Activated B cell treated with CpG ODN at 0.5 μM for 24 hours (primary cell): ENCODE measurements at regions of chr5 and their contacts with region 1.

Region 1: DNA sequence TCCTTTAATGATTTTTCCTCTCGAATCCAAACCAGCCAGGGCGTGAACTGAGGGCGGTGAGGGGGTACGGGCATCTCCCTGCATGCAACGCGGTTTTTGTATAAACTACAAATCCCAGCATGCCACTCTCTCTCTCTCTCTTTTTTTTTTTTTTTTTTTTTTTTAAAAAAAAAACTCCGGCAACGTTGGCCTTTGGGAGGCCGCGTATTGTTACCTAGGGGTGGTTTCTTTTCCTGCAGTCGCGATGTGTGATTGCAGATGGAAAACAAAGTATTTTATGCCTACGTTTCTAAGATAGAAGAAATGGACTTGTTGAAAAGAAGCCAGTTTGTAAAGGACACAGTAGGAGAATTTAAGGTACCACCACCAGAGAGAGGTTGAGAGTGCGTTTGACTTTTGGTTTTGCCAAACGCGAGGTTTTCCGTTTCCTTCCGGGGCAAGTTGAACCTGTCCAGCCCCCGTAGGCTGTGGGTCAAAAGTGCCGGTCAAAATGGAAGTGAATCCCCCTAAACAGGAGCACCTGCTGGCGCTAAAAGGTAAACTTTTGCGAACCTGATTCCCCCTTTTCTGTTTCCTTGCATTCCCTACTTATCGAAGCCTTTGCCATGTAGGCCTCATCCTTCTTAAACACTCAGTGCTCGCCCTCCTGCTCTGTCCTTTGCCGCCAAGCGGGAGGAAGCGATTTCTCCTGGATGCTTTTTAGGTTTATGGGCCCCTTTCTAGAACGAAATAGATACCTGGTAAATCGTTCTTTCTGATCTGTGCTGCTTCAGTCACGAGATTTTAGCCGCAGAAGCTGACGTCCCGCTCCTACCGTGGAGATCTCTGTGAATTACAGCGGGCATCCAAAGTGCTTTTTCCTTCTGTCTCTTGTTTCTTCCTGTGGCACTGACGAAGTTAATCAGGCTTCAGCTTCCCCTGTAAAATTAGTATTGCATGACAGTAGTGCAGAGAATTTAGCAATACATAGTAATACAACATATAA is at the starts of genes SHLD3 and TRAPPC13:
- DNase-seq: peak; percentile 58
- ATAC-seq: peak; percentile 74
- H3K4me3 Mint-ChIP-seq: peak within 1 kb of the TSS; percentile 99
- H3K27ac Mint-ChIP-seq: peak within 1 kb of the TSS; percentile 98
- H3K4me1 Mint-ChIP-seq: peaks cover 43% of the 10 kb centered on the region
- H3K27me3 Mint-ChIP-seq: no peaks in the 10 kb centered on the region
- CTCF ChIP-seq: no peak
- total RNA-seq, gene SHLD3: 5.7 and 6.2 TPM in 2 replicates
- total RNA-seq, gene TRAPPC13: 19.3 and 29.0 TPM in 2 replicates

Region 2: DNA sequence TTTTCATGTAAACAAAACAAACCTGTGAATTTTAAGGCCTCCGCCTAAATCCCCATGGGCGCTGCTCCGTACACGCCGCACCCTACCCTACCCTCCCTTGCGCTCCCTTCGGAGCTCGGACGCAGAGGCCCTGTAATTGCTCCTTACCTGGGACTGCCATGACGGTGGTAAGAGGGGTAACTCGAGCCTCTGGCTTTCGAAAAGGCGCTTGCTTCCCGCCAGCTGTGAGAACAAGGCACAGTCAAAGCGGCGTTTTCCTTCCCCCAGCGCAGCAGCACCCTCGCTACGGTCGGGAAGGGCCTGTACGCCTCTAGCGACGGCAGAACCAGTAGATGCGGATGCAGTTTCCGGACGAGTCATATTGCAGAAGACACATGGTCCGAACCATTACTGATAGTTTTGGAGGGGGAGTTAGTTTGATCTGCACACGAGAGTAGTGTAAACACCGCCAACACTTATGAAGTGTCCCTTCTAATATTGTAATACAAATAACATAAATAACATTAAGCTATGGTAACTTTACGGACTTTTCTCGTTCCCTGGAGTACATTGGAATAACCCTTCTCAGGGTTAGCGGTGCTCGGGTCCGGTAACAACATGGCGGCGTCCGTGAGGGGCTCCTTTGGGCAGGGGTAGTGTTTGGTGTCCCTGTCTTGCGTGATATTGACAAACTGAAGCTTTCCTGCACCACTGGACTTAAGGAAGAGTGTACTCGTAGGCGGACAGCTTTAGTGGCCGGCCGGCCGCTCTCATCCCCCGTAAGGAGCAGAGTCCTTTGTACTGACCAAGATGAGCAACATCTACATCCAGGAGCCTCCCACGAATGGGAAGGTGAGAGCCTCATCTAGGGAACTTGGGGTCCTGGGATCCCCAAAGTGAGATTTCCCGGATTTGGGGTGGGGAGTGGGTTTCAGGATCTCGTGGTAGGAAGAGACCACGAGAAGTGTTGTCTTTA is 856.2 kb before region 1 on chr5 and contains the starts of genes CWC27 and SREK1IP1:
- CTCF ChIA-PET with region 1: no interaction called
- POLR2A ChIA-PET with region 1: no interaction called
- intact Hi-C with region 1: loop called (anchors 1 kb)
- DNase-seq: peak; percentile 69
- ATAC-seq: peak; percentile 95
- H3K4me3 Mint-ChIP-seq: peak within 1 kb of the TSS; percentile 100
- H3K27ac Mint-ChIP-seq: peak within 1 kb of the TSS; percentile 99
- H3K4me1 Mint-ChIP-seq: peaks cover 62% of the 10 kb centered on the region
- H3K27me3 Mint-ChIP-seq: no peaks in the 10 kb centered on the region
- CTCF ChIP-seq: no peak
- total RNA-seq, gene CWC27: 28.9 and 29.2 TPM in 2 replicates
- total RNA-seq, gene SREK1IP1: 21.7 and 22.2 TPM in 2 replicates

Region 3: DNA sequence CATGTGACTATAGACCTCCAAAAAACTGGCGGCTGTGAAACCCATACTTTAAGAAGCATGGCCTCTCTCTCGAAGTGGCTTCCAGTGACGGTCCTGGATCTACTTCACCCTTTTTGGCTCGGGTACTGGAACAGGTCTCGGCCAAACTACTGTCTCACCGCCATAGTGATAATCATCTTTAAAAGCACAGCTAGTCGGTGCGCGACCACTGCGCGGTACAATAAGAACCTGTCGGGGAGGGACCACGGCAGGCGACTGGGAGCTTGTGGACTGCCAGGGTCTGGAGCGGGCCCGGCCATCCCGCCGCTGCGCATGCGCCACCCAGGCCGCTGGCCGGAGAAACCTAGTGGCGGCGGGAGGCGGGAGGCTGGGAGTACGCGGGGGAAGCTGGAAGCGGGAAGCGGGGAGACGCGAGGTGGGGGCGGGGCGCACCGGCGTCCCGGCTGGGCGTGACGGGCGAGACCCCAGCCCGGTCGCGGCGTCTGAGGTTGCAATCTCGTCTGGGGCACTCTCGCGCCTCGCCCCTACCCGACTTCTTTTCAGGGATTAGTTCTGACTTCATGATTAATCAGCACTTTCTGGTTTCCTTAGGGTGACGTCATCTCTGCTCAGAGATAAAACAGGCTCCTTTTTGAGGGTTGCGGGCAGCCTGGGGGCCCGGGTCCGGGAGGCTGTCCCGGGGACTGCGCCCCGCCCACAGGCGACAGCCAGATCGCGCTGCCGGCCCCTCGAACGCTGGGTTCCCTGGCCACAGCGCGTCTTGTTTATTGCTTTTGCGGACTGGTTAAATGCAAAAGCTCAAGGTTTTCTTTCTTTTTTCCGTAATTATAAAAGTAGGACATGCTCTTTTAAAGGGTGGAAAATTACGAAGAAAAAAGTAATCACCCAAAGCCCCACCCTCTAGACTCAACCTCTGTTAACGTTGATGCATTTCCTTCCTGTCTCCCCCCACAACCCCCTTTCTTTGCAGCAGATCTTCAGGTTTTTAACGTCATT is 589.4 kb before region 1 on chr5:
- CTCF ChIA-PET with region 1: no interaction called
- POLR2A ChIA-PET with region 1: no interaction called
- intact Hi-C with region 1: loop called (anchors 10 kb)
- DNase-seq: peak; percentile 70
- ATAC-seq: peak; percentile 80
- H3K4me3 Mint-ChIP-seq: peak overlapping the region; percentile 83
- H3K27ac Mint-ChIP-seq: peak overlapping the region; percentile 77
- H3K4me1 Mint-ChIP-seq: peaks cover 32% of the 10 kb centered on the region
- H3K27me3 Mint-ChIP-seq: no peaks in the 10 kb centered on the region
- CTCF ChIP-seq: no peak

Region 4: DNA sequence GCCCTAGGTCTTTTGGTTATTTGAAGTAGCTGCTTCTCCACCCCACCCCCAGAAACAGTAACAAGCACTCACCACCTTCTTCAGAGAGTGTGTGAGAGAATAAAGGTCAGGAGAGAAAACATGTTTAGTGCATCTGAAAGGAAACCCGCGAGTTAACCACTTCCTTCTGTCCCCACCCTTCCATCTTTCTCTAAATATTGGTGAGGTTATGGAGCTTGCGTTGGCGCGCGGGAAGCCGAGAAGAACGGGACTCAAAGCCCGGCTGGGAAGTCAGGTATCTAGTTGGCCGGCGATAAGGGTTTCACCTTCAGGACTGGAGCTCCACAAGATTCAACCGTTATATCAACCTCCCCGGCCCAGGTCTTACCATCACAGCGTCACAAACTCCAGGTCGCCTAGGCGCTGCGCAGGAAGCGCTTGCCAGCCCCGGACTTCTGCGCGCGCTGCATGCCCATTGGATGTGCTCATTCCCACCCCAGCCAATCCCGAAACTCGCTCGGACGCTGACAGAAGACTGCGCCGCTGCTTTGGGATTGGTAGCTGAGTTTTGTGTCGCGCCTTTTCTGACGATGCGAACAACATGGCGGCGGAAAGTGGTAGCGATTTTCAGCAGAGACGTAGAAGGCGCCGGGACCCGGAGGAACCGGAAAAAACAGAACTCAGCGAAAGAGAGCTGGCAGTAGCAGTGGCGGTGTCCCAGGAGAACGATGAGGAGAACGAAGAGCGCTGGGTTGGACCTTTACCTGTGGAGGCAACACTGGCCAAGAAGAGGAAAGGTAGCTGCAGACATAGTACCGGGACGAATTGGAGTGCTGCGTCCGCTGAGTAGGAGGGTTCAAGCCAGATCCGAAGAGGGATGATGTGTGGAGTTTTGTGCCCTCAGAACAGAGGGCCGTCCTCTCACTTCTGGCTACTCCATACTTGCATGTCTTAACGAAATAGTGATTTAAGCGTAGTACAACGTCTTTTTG is 61.8 kb before region 1 on chr5 and contains the starts of genes CENPK and PPWD1:
- CTCF ChIA-PET with region 1: no interaction called
- POLR2A ChIA-PET with region 1: interaction called, 24 read pairs
- intact Hi-C with region 1: loop called (anchors 1 kb)
- DNase-seq: peak; percentile 81
- ATAC-seq: peak; percentile 99
- H3K4me3 Mint-ChIP-seq: peak within 1 kb of the TSS; percentile 96
- H3K27ac Mint-ChIP-seq: peak within 1 kb of the TSS; percentile 97
- H3K4me1 Mint-ChIP-seq: peaks cover 41% of the 10 kb centered on the region
- H3K27me3 Mint-ChIP-seq: no peaks in the 10 kb centered on the region
- CTCF ChIP-seq: no peak
- total RNA-seq, gene CENPK: 10.7 and 15.1 TPM in 2 replicates
- total RNA-seq, gene PPWD1: 57.8 and 69.7 TPM in 2 replicates

Region 5: GRCh38 chr5:65721720-65722574 is 97.1 kb after region 1 on chr5 and contains the starts of genes NLN and SGTB:
- CTCF ChIA-PET with region 1: no interaction called
- POLR2A ChIA-PET with region 1: interaction called, 5 read pairs
- intact Hi-C with region 1: loop called (anchors 1 kb)
- DNase-seq: peak; percentile 92
- ATAC-seq: peak; percentile 97
- H3K4me3 Mint-ChIP-seq: peak within 1 kb of the TSS; percentile 89
- H3K27ac Mint-ChIP-seq: peak within 1 kb of the TSS; percentile 88
- H3K4me1 Mint-ChIP-seq: peaks cover 24% of the 10 kb centered on the region
- H3K27me3 Mint-ChIP-seq: no peaks in the 10 kb centered on the region
- CTCF ChIP-seq: no peak
- total RNA-seq, gene NLN: 14.2 and 16.5 TPM in 2 replicates
- total RNA-seq, gene SGTB: 7.1 and 9.5 TPM in 2 replicates

Region 6: GRCh38 chr5:66002415-66002814 is 377.6 kb after region 1 on chr5:
- CTCF ChIA-PET with region 1: no interaction called
- POLR2A ChIA-PET with region 1: no interaction called
- intact Hi-C with region 1: loop called (anchors 10 kb)
- DNase-seq: no peak
- ATAC-seq: no peak
- H3K4me3 Mint-ChIP-seq: no peak overlapping the region
- H3K27ac Mint-ChIP-seq: peak overlapping the region; percentile 13
- H3K4me1 Mint-ChIP-seq: peaks cover 19% of the 10 kb centered on the region
- H3K27me3 Mint-ChIP-seq: no peaks in the 10 kb centered on the region
- CTCF ChIP-seq: no peak